ENCODE measurements at regions of chr10 and their contacts with region 1.

Region 1: GRCh38 chr10:28302638-28303488 is at the start of gene MPP7:
- DNase-seq: peak; percentile 98
- ATAC-seq: peak; percentile 98
- total RNA-seq, gene MPP7: 13.1 TPM

Region 2: DNA sequence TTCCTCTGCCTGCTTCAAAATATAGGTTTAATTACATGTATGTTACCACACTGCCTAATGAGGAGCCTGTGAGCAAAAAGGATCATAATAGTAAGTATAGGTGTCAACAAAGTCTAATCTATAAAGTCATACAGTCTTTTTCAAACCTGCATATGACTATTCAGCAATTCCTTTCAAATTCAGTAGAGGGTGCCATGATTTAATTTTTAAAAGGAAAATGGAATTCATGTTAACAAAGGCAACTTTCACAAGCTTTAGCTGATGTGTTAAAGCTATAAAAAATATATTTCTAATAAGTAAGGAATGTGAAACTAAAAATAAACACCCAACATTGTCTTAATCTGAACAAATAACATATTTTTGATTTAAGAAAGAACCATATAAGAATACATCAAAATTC is 52.1 kb before region 1 on chr10:
- intact Hi-C with region 1: loop called (anchors 5 kb)
- DNase-seq: no peak
- ATAC-seq: no peak

Region 3: GRCh38 chr10:28326516-28327490 is 23.9 kb after region 1 on chr10:
- intact Hi-C with region 1: loop called (anchors 1 kb)
- DNase-seq: peak; percentile 64
- ATAC-seq: peak; percentile 90

Region 4: GRCh38 chr10:28381903-28382347 is 79.1 kb after region 1 on chr10:
- intact Hi-C with region 1: loop called (anchors 1 kb)
- DNase-seq: peak; percentile 77
- ATAC-seq: peak; percentile 84